SK-N-SH (cell line): ENCODE measurements at regions of chr17 and their contacts with region 1.

Region 1: GRCh38 chr17:43483674-43484372 is at the start of gene DHX8:
- DNase-seq: peak; percentile 90
- H3K4me3 ChIP-seq: peak within 1 kb of the TSS; percentile 81 to 97
- H3K27ac ChIP-seq: peak within 1 kb of the TSS; percentile 81 to 87
- H3K4me1 ChIP-seq: peaks cover 3 to 8% of the 10 kb centered on the region in 2 experiments; a peak in 2 of 4 replicates
- H3K27me3 ChIP-seq: no peaks in the 10 kb centered on the region
- CTCF ChIP-seq: peak; percentile 100
- EP300 ChIP-seq: peak; percentile 8 to 72; a peak in 2 of 4 replicates
- RAD21 ChIP-seq: peak; percentile 100
- polyA plus RNA-seq, gene DHX8: 31.3 and 35.1 TPM in 2 replicates

Region 2: DNA sequence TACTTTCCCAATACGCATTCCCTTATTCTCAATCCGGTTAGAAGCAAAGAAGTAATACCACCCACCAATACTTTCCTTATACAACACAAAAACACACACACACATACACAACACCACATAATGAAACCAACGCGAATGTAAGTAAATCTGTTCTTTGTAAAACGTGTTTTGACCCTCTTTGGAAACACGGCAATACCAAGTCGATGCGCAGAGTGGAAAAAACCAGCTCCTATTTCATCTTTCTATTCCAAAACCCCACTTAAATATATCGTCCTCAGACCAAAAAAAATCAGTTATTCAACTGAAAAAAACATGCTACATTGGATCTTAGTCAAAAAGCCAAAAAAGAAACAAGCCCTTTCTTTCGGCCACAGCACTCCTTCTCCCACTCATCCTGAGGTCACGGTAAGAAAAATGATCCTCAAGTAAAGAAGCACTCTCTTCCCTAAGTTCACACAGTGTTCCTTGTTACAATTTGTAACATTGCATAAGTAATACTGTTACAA is 116.0 kb before region 1 on chr17:
- CTCF ChIA-PET with region 1: interaction called, 36 read pairs
- POLR2A ChIA-PET with region 1: interaction called, 46 read pairs
- DNase-seq: peak; percentile 67
- H3K4me3 ChIP-seq: peak overlapping the region in 1 of 2 experiments; percentile 36; a peak in 2 of 4 replicates
- H3K27ac ChIP-seq: peak overlapping the region; percentile 92 to 95
- H3K4me1 ChIP-seq: peaks cover 7 to 11% of the 10 kb centered on the region in 2 experiments; a peak in 3 of 4 replicates
- H3K27me3 ChIP-seq: no peaks in the 10 kb centered on the region
- CTCF ChIP-seq: no peak
- EP300 ChIP-seq: peak; percentile 22 to 31; a peak in 1 of 4 replicates
- RAD21 ChIP-seq: no peak; the same call in 1 of the 2 replicates

Region 3: DNA sequence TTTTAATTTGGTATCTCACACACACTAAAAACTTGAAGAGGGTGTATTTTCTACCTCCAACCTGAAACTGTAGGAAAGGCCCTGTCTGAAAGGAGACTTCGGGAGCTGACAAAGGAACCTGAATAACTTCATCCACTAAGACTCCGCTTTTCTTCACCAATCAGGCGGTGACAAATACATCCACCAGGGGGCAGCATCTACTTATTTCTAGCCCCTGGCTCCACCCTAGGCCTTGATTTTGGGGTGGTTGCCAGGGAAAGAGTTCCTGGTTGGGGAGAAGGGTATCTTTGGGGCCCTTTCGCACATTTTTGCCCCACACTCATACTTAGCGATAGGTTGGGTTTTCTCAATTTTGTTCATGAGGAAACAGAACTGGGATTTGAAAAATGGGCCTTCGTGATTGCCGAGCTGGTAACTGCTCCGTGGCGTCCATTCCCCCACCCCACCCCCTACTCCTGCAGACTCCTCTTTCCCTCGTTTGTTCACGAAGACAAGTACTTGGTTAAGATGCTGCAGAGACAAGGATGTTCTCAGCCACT is 89.8 kb before region 1 on chr17:
- CTCF ChIA-PET with region 1: interaction called, 430 read pairs
- POLR2A ChIA-PET with region 1: interaction called, 29 read pairs
- DNase-seq: peak; percentile 87
- H3K4me3 ChIP-seq: no peak overlapping the region; a peak in 1 of 4 replicates
- H3K27ac ChIP-seq: no peak overlapping the region
- H3K4me1 ChIP-seq: peaks cover 0 to 4% of the 10 kb centered on the region in 2 experiments; a peak in 1 of 4 replicates
- H3K27me3 ChIP-seq: no peaks in the 10 kb centered on the region
- CTCF ChIP-seq: peak; percentile 92
- EP300 ChIP-seq: no peak
- RAD21 ChIP-seq: peak; percentile 98

Region 4: DNA sequence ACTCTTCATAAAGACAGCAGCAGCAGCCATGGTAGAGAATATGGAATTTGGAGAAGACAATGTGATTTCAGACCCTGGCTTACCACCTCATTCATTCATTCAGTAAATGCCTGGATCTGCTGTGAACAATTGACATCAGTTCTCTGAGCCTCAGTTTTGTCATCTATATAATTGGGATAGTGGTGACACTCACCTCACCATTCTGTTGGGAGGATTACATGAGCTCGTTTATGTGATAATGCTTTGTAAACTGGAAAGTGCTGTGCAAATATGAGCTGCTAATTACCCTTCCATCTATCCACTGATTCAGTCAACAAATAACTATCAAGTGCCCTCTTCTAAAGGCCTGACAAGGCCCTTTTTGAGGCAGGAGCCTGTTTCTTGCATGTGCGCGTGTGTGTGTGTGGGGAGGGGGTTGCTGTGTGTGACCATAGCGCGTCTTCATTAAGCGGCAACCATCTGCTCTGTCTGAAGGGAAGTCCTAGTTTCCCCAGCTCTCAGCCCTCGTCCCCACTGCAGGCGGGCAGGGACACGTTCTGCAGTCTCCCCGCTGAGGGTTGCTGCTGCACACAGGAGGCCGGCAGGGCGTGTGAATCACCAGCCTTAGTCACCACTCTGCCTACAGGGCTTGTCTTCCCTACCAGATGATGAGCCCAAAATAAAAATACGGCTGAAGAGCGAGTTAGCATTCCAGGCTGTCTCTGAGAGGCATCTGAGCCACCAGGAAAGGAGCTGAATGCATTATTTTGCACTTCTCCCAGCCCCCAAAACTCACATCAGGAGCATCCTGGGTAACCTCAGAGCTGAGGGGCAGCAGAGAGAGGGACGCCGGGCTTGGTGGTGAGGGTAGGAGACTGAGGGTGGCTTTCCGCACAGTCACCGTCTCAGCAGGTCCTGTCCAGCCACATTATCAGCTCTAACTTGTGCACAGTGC is 65.1 kb before region 1 on chr17:
- CTCF ChIA-PET with region 1: interaction called, 16 read pairs
- POLR2A ChIA-PET with region 1: no interaction called
- DNase-seq: no peak
- H3K4me3 ChIP-seq: peak overlapping the region in 1 of 2 experiments; percentile 38; a peak in 2 of 4 replicates
- H3K27ac ChIP-seq: peak overlapping the region; percentile 64 to 89
- H3K4me1 ChIP-seq: peaks cover 11 to 18% of the 10 kb centered on the region in 2 experiments; a peak in 3 of 4 replicates
- H3K27me3 ChIP-seq: no peaks in the 10 kb centered on the region
- CTCF ChIP-seq: no peak
- EP300 ChIP-seq: peak in 1 of 2 experiments; percentile 54; a peak in 1 of 4 replicates
- RAD21 ChIP-seq: no peak

Region 5: DNA sequence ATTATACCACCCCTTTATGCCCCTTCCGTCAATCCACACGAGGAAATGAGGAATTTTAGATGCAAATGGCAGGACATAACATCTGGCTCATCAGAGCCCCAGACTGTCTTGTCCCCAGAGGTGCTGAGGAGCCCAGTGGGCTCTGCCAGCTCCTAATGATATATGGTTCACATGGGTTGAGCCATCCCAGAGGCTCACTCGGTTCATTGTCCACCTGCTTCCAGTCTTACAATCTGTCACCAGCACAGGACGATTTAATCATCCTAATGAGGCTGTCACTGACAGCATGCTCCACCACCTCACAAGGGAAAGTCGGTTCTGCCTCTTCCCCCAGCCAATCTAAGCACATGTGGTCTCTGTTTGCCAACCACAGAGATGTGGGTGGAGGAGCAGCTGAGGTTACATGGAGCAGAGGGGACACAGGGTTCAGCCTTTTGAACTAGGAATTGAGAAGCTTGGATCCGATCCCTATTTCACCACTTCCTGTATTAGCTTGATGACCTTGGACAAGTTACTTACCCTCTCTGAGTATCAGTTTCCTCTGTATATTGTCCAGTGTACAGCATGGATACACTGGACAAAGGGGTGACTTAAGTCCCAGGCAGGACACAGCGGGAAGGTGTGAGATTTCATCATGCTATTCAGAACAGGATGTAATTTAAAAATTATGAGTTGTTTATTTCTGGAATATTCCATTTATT is 27.0 kb before region 1 on chr17:
- CTCF ChIA-PET with region 1: interaction called, 16 read pairs
- POLR2A ChIA-PET with region 1: no interaction called
- DNase-seq: no peak
- H3K4me3 ChIP-seq: no peak overlapping the region
- H3K27ac ChIP-seq: no peak overlapping the region
- H3K4me1 ChIP-seq: peaks cover 4 to 6% of the 10 kb centered on the region in 2 experiments; a peak in 1 of 4 replicates
- H3K27me3 ChIP-seq: no peaks in the 10 kb centered on the region
- CTCF ChIP-seq: no peak
- EP300 ChIP-seq: no peak
- RAD21 ChIP-seq: no peak

Region 6: DNA sequence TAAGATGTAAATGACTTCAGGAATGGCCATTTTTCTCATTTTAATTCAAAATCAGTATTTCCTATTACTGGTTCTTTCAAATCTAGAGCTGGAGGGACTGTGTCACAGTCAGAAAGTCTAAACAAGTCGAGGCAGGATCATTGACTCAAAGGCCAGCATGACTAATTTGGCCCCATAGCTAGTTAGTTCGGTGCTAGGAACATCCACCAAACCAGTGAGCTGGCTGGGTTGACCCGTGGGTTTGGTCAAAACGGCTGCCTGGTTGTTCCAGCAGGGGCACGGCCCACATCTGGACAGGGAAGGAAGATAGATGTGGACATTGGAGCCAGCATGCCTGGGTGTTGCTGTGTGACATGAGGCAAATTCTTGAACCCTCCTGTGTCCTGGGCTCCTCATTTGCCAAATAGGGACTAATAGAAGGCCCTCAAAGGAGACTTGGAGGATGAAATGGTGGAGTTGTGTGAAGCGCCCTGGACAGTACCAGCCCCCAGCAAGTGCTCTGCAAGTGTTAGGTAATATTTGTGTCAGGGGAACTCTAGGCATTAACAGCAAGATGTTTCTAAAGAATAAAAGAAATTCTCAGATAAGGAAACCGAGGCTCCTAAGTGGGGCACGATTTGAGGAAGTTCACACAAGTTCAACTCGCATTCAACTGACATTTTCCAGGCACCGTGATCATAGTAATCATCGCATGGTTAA is 131.7 kb after region 1 on chr17:
- CTCF ChIA-PET with region 1: no interaction called
- POLR2A ChIA-PET with region 1: no interaction called
- DNase-seq: no peak
- H3K4me3 ChIP-seq: no peak overlapping the region
- H3K27ac ChIP-seq: no peak overlapping the region
- H3K4me1 ChIP-seq: no peaks in the 10 kb centered on the region
- H3K27me3 ChIP-seq: no peaks in the 10 kb centered on the region
- CTCF ChIP-seq: no peak
- EP300 ChIP-seq: no peak
- RAD21 ChIP-seq: no peak